Colonic mucosa (tissue), 4 donors: ENCODE measurements at regions of chr11 and their contacts with region 1.

Region 1: GRCh38 chr11:2305140-2305840 is 3.5 kb downstream of the TSPAN32 start:
- DNase-seq: peak; percentile 89
- H3K4me3 ChIP-seq: no peak overlapping the region
- H3K27ac ChIP-seq: no peak overlapping the region
- H3K4me1 ChIP-seq: peaks cover 3% of the 10 kb centered on the region
- H3K27me3 ChIP-seq: no peaks in the 10 kb centered on the region
- CTCF ChIP-seq: peak; percentile 93

Region 2: DNA sequence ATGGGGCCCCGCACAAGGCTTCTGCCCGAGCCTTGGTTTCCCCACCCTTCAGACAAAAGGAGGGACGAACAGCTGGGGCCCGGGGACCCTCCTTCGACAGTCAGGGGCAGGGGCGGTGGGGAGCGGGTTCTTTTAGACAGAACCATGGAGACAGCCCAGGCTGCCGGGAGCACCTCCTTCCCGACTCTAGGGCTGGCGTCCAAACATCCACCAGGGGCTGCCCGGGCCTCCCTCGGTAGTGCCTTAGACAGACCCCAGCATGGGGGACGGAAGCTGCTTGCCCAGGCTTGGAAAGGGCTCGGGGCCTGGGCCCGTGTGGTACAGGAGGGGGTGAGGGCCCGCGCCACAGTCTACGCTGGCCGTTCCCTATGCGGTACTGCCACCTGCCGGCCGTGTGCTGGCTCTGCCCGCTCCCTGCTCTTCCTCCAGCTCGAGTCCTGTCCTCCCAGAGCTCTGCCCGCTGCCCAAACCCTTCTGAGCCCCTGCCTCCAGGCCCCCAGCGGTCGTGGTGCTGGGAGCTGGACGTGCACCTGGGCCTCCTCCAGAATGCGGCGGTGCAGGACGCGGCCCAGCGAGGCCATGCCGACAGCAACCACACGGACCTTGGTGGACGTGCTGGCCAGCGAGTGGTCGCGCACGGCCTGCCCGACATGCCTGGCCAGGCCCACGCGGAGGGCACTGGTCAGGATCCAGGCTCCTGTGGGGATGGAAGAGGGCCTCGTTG is 115.4 kb after region 1 on chr11:
- intact Hi-C with region 1: loop called (anchors 1 kb)
- DNase-seq: peak; percentile 79
- H3K4me3 ChIP-seq: peak overlapping the region; percentile 27
- H3K27ac ChIP-seq: no peak overlapping the region
- H3K4me1 ChIP-seq: peaks cover 7% of the 10 kb centered on the region
- H3K27me3 ChIP-seq: peaks cover 7% of the 10 kb centered on the region
- CTCF ChIP-seq: peak; percentile 87